ENCODE measurements at regions of chr10 and their contacts with region 1.

Region 1: DNA sequence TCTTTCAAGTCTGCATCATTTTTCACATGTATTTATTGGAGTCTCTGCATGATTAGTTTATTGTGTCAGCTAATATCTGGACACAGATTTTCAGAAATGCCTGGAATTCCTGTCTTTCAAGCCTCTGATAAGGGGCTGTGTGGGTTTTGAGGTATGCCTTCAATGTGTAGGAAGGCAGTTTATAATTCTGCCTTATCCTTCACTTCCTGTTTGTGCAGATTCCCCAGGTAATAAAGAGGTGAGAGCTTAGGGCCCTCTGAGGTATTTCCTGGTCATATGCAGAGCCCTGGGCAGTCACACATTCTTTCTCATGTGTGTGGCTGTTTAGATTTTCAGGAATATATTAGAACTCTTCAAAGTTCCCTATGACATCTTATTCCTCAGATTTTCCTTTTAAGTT is 79.4 kb upstream of the PRKCQ start:
- DNase-seq: no peak
- H3K4me3 ChIP-seq: no peak overlapping the region
- H3K27ac ChIP-seq: no peak overlapping the region
- H3K4me1 ChIP-seq: no peaks in the 10 kb centered on the region
- H3K27me3 ChIP-seq: no peaks in the 10 kb centered on the region
- CTCF ChIP-seq: no peak
- POLR2A ChIP-seq: no peak

Region 2: GRCh38 chr10:6473901-6474370 is 185.5 kb before region 1 on chr10:
- intact Hi-C with region 1: no loop called
- DNase-seq: no peak
- H3K4me3 ChIP-seq: no peak overlapping the region
- H3K27ac ChIP-seq: no peak overlapping the region
- H3K4me1 ChIP-seq: no peaks in the 10 kb centered on the region
- H3K27me3 ChIP-seq: no peaks in the 10 kb centered on the region
- CTCF ChIP-seq: no peak
- POLR2A ChIP-seq: no peak

Region 3: DNA sequence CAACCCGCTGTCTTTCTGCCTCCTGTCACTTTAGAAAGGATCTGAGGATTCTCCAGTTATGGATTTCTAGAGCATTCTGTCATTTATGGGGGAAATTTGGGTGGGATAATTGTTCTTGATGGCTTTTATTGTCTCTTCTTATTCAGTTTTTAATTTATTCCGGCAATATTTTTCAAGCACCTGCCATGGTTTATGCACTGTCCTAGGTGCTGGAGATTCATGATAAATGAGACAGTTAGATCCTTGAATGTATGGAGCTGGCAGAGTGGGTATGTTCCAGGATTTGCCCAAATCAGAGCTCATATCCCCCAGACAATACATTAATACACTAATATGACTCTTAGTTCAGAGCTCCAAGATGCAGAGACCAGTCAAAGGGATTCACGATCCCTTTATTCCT is 67.5 kb after region 1 on chr10:
- intact Hi-C with region 1: loop called (anchors 2 kb)
- DNase-seq: no peak
- H3K4me3 ChIP-seq: no peak overlapping the region
- H3K27ac ChIP-seq: no peak overlapping the region
- H3K4me1 ChIP-seq: peaks cover 0 to under 1% of the 10 kb centered on the region in 2 donors
- H3K27me3 ChIP-seq: no peaks in the 10 kb centered on the region
- CTCF ChIP-seq: no peak
- POLR2A ChIP-seq: no peak